AG04449 (cell line): ENCODE measurements at regions of chr4 and their contacts with region 1.

Region 1: DNA sequence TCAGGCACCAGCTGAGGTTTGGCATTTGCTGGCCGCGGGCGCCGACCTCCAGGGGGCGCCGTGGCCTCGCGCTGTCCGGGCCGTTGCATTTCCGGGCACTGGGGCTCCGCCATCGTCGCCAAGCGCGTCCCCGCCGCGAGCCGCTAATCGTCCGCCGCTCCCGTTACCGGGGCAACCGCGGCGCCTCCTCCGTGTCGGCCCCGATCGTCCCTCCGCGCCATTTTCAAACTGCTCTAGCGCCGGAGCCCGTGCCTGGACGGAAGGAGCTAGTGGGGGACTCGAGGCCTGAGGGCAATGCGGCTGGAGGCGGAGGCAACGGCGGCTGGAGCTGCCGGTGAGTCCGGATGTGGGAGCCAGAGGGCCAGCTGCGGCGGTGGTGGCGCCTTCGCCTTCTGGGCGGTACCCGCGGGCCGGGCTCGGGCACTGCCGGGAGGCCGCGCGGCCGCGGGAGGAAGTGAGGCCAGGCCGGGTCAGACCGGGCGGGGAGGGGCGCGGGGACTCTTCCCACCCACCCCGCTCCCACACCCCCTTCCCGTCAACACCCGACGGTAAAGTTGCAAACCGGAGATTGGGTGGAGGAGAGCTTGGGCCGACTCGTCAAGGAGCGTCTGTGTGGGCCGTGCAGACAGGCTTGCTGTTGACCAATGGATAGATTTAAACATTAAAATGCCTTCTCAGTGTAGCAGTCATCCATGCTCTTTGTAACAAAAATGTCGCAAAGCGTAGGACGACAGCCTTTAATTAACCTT is at the start of gene CEP135:
- DNase-seq: no peak
- H3K4me3 ChIP-seq: peak within 1 kb of the TSS; percentile 82
- CTCF ChIP-seq: peak; percentile 97

Region 2: DNA sequence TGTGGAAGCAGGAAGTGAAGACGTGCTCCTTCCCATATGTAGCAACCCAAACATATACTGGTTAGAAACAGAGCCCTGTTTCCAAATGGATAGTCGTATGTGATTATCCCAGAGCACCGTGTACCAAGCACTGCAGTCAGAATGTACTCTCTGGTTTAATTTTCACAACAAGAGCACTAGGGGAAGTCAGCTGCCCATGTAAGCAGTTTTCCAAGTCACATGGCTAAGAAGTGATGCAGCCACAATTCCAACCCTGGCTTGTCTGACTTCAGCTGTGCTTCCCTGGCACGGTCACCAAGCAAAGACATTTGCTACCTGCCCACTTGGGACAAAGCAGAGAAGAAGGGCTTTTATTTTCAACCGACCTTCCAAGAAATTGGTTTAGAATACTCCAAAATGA is 28.3 kb before region 1 on chr4:
- CTCF ChIA-PET with region 1: interaction called, 10 read pairs
- POLR2A ChIA-PET with region 1: no interaction called
- DNase-seq: no peak
- H3K4me3 ChIP-seq: no peak overlapping the region
- CTCF ChIP-seq: no peak

Region 3: DNA sequence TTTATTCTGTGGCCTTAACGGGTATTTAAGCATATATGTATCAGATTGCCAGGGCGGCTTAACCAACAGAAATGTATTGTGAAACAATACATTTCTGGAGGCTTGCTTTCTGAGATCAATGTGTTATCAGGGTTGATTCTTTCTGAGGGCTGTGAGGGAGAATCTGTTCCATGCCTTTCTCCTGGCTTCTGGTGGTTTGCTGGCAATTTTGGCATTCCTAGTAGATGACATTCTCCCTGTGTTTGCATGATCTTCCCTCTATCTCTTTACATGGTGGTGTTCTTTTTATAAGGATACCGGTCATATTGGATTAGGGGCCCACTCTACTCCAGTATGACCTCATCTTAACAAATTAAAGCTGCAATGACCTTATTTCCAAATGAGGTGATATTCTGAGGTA is 17.1 kb before region 1 on chr4:
- CTCF ChIA-PET with region 1: interaction called, 49 read pairs
- POLR2A ChIA-PET with region 1: interaction called, 9 read pairs
- DNase-seq: no peak
- H3K4me3 ChIP-seq: no peak overlapping the region
- CTCF ChIP-seq: no peak

Region 4: GRCh38 chr4:55965585-55965984 is 16.7 kb after region 1 on chr4:
- CTCF ChIA-PET with region 1: interaction called, 23 read pairs
- POLR2A ChIA-PET with region 1: no interaction called
- DNase-seq: no peak
- H3K4me3 ChIP-seq: no peak overlapping the region
- CTCF ChIP-seq: no peak

Region 5: DNA sequence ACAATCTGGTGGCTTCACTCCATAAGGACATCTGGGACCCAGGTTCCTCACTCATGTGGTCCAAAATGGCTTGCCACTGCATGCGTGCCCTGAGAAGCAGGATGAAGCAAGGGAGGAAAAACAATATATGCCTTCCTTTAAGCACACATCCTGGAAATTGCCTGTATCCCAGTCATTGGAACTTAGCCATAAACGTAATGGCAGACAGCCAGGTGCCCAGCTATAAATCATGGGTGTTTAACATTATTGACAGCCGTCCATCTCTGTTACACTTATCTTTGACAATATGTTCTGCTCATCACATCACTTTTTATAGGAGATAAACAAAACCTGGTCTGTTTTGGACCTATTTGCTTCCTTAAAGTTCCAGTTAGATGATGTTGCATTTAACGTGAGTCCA is 257.4 kb after region 1 on chr4:
- CTCF ChIA-PET with region 1: no interaction called
- POLR2A ChIA-PET with region 1: no interaction called
- DNase-seq: no peak
- H3K4me3 ChIP-seq: no peak overlapping the region
- CTCF ChIP-seq: no peak

Region 6: GRCh38 chr4:56301181-56302076 is 352.5 kb after region 1 on chr4:
- CTCF ChIA-PET with region 1: interaction called, 20 read pairs
- POLR2A ChIA-PET with region 1: no interaction called
- DNase-seq: peak; percentile 65
- H3K4me3 ChIP-seq: no peak overlapping the region
- CTCF ChIP-seq: peak; percentile 90